ENCODE measurements at regions of chr17 and their contacts with region 1.

Region 1: GRCh38 chr17:48878918-48879898 is 13.4 kb upstream of the ATP5MC1 start:
- DNase-seq: peak; percentile 73
- ATAC-seq: peak; percentile 82
- H3K4me3 Mint-ChIP-seq: no peak overlapping the region
- H3K27ac Mint-ChIP-seq: no peak overlapping the region
- H3K4me1 Mint-ChIP-seq: peaks cover 25% of the 10 kb centered on the region
- H3K27me3 Mint-ChIP-seq: peaks cover 9% of the 10 kb centered on the region

Region 2: DNA sequence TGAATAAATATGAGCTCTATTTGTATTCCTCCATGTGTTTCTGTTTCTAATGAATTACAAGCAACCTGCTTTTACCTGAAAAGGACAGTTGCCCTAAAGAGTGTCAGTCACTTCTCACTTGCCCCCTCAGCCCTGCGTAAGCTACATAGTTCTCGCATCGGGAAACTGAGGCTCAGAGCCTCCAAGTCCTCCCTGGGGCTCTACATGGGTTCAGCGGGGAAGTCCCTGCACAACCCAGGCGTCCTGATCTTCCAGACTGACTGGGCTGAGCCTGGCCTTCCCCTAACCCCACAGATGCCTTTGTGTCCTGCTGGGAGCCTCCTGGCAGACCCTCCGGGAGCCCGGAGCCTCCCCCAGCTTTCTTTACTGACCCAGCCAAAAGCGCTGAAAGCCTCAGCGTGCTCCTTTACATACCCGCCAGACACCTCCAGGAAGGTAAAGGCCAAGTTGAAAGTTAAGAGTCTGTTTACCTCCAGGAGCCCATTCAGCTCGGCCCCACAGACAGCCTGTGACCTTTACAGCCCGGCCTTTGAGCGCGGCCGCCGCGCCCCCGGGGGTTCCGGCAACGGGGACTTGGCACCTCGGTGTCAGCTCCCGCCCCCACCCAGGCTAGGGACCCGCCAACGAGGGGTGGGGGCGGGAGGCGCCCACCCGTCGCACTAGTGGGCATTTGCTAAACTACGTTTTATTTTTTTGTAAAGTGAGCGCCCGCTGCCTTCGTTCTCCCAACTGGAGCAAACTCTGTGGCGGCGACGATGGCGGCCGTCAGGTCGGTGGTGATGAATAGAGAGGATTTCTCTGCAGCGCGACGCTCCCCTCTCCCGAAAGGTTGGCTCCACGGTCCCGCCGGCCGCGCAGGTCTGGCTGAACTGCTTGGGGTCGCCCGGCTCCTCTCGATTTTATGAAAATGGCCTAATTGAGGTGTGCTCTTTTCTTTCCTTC is 146.2 kb before region 1 on chr17:
- CTCF ChIA-PET with region 1: interaction called, 11 read pairs
- POLR2A ChIA-PET with region 1: no interaction called
- DNase-seq: no peak
- ATAC-seq: no peak
- H3K4me3 Mint-ChIP-seq: no peak overlapping the region
- H3K27ac Mint-ChIP-seq: no peak overlapping the region
- H3K4me1 Mint-ChIP-seq: peaks cover 23% of the 10 kb centered on the region
- H3K27me3 Mint-ChIP-seq: peaks cover 92% of the 10 kb centered on the region

Region 3: GRCh38 chr17:48799069-48799723 is 80.0 kb before region 1 on chr17:
- CTCF ChIA-PET with region 1: interaction called, 756 read pairs
- POLR2A ChIA-PET with region 1: interaction called, 6 read pairs
- DNase-seq: no peak
- ATAC-seq: no peak
- H3K4me3 Mint-ChIP-seq: no peak overlapping the region
- H3K27ac Mint-ChIP-seq: no peak overlapping the region
- H3K4me1 Mint-ChIP-seq: no peaks in the 10 kb centered on the region
- H3K27me3 Mint-ChIP-seq: peaks cover 30% of the 10 kb centered on the region

Region 4: GRCh38 chr17:48836004-48836403 is 43.2 kb before region 1 on chr17:
- CTCF ChIA-PET with region 1: interaction called, 20 read pairs
- POLR2A ChIA-PET with region 1: no interaction called
- DNase-seq: no peak
- ATAC-seq: no peak
- H3K4me3 Mint-ChIP-seq: no peak overlapping the region
- H3K27ac Mint-ChIP-seq: peak overlapping the region; percentile 1
- H3K4me1 Mint-ChIP-seq: peaks cover 93% of the 10 kb centered on the region
- H3K27me3 Mint-ChIP-seq: no peaks in the 10 kb centered on the region

Region 5: GRCh38 chr17:48860034-48860433 is 19.2 kb before region 1 on chr17:
- CTCF ChIA-PET with region 1: interaction called, 26 read pairs
- POLR2A ChIA-PET with region 1: no interaction called
- DNase-seq: no peak
- ATAC-seq: no peak
- H3K4me3 Mint-ChIP-seq: no peak overlapping the region
- H3K27ac Mint-ChIP-seq: no peak overlapping the region
- H3K4me1 Mint-ChIP-seq: peaks cover 9% of the 10 kb centered on the region
- H3K27me3 Mint-ChIP-seq: no peaks in the 10 kb centered on the region

Region 6: GRCh38 chr17:48961516-48962233 is 82.5 kb after region 1 on chr17:
- CTCF ChIA-PET with region 1: no interaction called
- POLR2A ChIA-PET with region 1: no interaction called
- DNase-seq: no peak
- ATAC-seq: no peak
- H3K4me3 Mint-ChIP-seq: no peak overlapping the region
- H3K27ac Mint-ChIP-seq: no peak overlapping the region
- H3K4me1 Mint-ChIP-seq: peaks cover 2% of the 10 kb centered on the region
- H3K27me3 Mint-ChIP-seq: peaks cover 23% of the 10 kb centered on the region

Region 7: DNA sequence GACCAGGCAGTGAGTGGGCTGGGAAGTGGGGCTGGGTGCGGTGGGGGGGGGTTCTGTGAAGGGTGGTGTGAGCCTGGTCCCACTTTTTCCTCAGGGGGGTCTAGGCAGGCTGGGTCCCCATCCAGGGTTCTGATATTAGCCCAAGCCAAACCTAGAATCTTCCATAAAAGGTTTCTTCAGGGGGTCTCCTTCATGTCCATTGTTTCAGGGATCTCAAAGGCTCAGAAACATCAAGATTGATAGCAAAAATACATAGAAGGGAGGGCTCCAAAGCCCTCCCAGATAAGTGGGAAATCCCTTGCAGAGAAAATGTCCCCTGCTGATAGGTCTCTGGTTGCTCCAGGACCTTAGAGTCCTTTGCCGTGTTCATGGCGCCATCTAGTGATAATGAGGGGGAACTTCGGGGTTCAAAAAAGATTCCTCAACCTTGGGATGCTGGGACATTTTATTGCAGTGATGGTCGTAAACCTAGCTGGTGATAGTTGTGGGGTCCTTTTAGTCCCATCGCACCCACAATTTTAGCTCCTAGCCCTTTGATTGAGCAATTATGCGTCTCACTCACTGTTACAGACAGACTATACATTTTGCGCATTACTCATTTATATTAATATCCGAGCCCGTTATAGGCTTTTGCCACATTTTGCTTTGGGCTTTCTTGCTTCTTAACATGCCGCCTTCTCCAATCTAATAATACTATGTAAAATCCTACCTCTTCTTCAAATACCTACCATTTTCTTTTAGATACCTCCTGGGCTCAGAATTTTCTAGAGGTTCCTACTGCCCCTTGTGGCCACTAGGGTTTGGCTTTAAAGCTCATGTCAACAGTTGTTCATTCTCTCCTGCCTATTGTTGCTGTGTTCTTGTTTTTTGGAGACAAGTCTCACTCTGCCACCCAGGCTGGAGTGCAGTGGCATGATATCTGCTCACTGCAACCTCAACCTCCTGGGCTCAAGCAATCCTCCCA is 153.0 kb after region 1 on chr17:
- CTCF ChIA-PET with region 1: interaction called, 24 read pairs
- POLR2A ChIA-PET with region 1: no interaction called
- DNase-seq: peak; percentile 64
- ATAC-seq: peak; percentile 82
- H3K4me3 Mint-ChIP-seq: no peak overlapping the region
- H3K27ac Mint-ChIP-seq: no peak overlapping the region
- H3K4me1 Mint-ChIP-seq: no peaks in the 10 kb centered on the region
- H3K27me3 Mint-ChIP-seq: peaks cover 3% of the 10 kb centered on the region